Endothelial cell of umbilical vein (primary cell): ENCODE measurements at regions of chr5 and their contacts with region 1.

Region 1: DNA sequence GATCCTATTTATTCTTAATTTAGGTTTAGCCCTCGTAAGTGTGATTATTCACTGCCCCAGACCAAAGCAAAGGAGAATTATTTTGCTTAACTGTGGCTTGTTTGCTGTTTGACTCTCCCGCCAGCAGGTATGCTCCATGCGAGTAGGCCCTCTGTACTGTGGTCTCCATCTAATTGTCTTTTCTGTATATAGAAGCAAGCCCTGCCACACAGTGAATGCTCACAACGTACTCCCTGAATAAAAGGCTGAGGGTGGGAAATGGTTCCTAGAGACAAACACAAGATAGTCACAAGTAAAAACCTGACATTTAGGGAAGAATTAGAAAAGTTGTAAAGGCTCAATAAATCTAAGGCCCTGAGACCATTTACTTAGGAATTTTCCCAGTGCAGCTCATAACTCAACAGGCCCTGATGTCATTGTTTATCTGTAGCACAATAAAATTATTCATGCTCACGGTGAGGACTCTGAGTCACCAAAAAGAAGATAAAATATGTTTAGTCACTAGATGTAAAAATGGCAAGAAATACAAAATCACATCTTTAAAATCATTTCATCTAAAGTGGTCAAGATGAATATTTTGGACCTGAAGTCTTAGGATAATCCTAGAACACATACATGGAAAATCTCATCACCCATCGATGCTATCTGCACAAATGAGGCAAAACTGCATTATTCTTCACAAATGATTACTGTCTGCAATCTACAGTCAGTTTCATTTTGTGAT is 473.2 kb downstream of the ENC1 start:
- DNase-seq: peak; percentile 84
- H3K4me3 ChIP-seq: no peak overlapping the region
- H3K27ac ChIP-seq: peak overlapping the region; percentile 60
- H3K4me1 ChIP-seq: peaks cover 20% of the 10 kb centered on the region
- H3K27me3 ChIP-seq: peaks cover 2% of the 10 kb centered on the region in 2 experiments
- CTCF ChIP-seq: no peak
- POLR2A ChIP-seq: no peak

Region 2: GRCh38 chr5:74141053-74141452 is 26.3 kb before region 1 on chr5:
- CTCF ChIA-PET with region 1: interaction called, 3 read pairs
- POLR2A ChIA-PET with region 1: no interaction called
- dilution Hi-C with region 1: no loop called
- intact Hi-C with region 1: loop called (anchors 1 kb)
- DNase-seq: peak; percentile 89
- H3K4me3 ChIP-seq: no peak overlapping the region
- H3K27ac ChIP-seq: peak overlapping the region; percentile 52
- H3K4me1 ChIP-seq: peaks cover 9% of the 10 kb centered on the region
- H3K27me3 ChIP-seq: no peaks in the 10 kb centered on the region
- CTCF ChIP-seq: no peak
- POLR2A ChIP-seq: no peak